Activated T-helper 2 cell treated with anti-CD3 and anti-CD28 coated beads, Interferon-gamma antibody, Interleukin-2, Interleukin-4, amounts not matched to agents 10 μg/mL and 5 μg/mL and 100 μg/mL, durations not matched to agents 14 hours and 24 hours and 36 hours (primary cell): ENCODE measurements at regions of chr2 and their contacts with region 1.

Region 1: GRCh38 chr2:73828818-73829570 is at the start of gene STAMBP:
- DNase-seq: peak; percentile 89
- H3K4me3 Mint-ChIP-seq: peak within 1 kb of the TSS; percentile 99
- H3K27ac Mint-ChIP-seq: peak within 1 kb of the TSS; percentile 98
- H3K4me1 Mint-ChIP-seq: peaks cover 44% of the 10 kb centered on the region
- H3K27me3 Mint-ChIP-seq: peaks cover 3% of the 10 kb centered on the region
- total RNA-seq, gene STAMBP: 54.3 and 63.4 TPM in 2 replicates

Region 2: GRCh38 chr2:73233154-73233931 is 595.7 kb before region 1 on chr2 and contains the start of gene PRADC1:
- intact Hi-C with region 1: no loop called
- DNase-seq: peak; percentile 96
- H3K4me3 Mint-ChIP-seq: peak within 1 kb of the TSS; percentile 96
- H3K27ac Mint-ChIP-seq: peak within 1 kb of the TSS; percentile 92
- H3K4me1 Mint-ChIP-seq: peaks cover 31% of the 10 kb centered on the region
- H3K27me3 Mint-ChIP-seq: no peaks in the 10 kb centered on the region
- total RNA-seq, gene PRADC1: 10.5 and 11.4 TPM in 2 replicates

Region 3: DNA sequence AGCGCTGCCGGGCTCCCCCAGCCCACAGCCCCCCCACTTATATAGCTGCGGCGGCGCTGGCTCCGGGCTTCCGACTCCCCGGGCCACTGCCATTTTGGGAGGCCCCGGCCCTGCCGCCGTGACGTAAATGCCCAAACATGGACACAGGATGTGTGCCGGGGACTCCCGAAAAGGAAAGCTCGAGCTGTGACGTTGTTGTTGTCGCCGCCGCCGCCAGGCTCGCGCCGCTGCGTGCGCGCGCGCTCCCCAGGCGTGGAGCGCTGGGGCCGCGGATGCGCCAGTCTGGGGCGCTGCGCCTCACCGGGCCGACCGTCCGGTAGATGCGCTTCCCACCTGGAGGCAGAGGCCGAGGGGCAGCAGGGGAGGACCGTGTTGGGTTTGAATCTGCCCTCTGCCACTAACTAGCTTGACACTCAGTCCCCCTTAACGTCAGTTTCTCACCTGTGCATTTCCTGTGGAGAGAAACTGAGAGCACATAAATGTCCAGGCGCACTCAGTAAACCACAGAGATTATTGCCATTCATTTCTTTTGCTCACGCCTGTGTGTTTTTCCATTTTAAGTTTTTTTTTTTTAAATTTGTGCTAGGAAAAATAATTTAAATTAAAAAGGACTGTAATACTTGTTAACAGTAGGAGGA is 535.3 kb before region 1 on chr2 and contains the start of gene EGR4:
- intact Hi-C with region 1: no loop called
- DNase-seq: peak; percentile 87
- H3K4me3 Mint-ChIP-seq: peak within 1 kb of the TSS; percentile 69
- H3K27ac Mint-ChIP-seq: no peak within 1 kb of the TSS
- H3K4me1 Mint-ChIP-seq: peaks cover 5% of the 10 kb centered on the region
- H3K27me3 Mint-ChIP-seq: peaks cover 67% of the 10 kb centered on the region
- total RNA-seq, gene EGR4: 0.46 and 0.53 TPM in 2 replicates

Region 4: DNA sequence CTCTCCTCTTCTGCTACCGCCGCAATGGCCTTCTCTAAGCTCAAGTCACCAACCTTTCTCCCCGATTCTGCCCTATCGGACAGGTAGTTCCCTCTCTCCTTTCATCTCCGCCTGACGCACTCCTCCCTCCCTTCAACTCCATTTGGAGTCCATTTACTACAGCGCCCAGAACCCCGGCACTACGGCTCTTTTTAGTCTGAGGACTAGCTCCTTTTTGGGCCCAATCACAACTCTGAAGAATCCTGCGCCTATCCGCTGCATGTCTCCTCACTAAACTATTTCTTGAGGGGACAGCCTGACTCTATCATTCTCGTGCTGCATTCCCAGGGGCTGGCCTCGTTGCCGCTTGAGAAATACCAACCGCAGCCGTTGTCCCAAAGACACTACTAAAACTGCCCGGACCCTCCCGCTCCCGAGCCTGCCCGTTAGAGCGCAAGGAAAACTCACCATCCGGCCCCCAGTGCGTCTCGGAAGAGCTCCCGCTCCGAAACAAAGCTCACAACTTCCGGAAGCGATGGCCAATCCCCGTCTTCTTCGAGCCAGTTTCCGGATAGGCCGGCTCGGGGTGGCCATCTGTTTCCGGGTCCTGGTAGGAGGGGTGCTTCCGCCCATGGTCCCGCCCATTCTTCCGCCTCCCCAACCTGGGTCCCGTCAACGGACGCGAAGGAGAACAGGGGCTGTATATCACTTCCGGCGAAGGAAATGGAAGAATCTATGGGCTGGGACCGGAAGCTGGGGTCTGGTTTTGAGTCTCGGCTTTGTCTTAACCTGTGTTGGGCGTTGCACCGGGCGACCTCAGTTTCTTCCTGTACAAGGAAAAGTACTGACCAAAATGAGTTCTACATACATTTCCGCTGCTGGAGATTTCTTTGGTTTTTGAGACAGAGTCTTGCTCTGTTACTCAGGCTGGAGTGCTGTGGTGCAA is 91.9 kb before region 1 on chr2 and contains the start of gene TPRKB:
- intact Hi-C with region 1: loop called (anchors 1 kb)
- DNase-seq: peak; percentile 95
- H3K4me3 Mint-ChIP-seq: peak within 1 kb of the TSS; percentile 97
- H3K27ac Mint-ChIP-seq: peak within 1 kb of the TSS; percentile 87
- H3K4me1 Mint-ChIP-seq: peaks cover 8% of the 10 kb centered on the region
- H3K27me3 Mint-ChIP-seq: no peaks in the 10 kb centered on the region
- total RNA-seq, gene TPRKB: 31.9 and 36.0 TPM in 2 replicates

Region 5: GRCh38 chr2:73859721-73860586 is 31.0 kb after region 1 on chr2:
- intact Hi-C with region 1: loop called (anchors 1 kb)
- DNase-seq: no peak
- H3K4me3 Mint-ChIP-seq: no peak overlapping the region
- H3K27ac Mint-ChIP-seq: peak overlapping the region; percentile 57
- H3K4me1 Mint-ChIP-seq: peaks cover 47% of the 10 kb centered on the region
- H3K27me3 Mint-ChIP-seq: no peaks in the 10 kb centered on the region

Region 6: GRCh38 chr2:73896362-73897239 is 67.6 kb after region 1 on chr2:
- intact Hi-C with region 1: loop called (anchors 1 kb)
- DNase-seq: peak; percentile 24
- H3K4me3 Mint-ChIP-seq: peak overlapping the region; percentile 42
- H3K27ac Mint-ChIP-seq: peak overlapping the region; percentile 92
- H3K4me1 Mint-ChIP-seq: peaks cover 35% of the 10 kb centered on the region
- H3K27me3 Mint-ChIP-seq: no peaks in the 10 kb centered on the region

Region 7: DNA sequence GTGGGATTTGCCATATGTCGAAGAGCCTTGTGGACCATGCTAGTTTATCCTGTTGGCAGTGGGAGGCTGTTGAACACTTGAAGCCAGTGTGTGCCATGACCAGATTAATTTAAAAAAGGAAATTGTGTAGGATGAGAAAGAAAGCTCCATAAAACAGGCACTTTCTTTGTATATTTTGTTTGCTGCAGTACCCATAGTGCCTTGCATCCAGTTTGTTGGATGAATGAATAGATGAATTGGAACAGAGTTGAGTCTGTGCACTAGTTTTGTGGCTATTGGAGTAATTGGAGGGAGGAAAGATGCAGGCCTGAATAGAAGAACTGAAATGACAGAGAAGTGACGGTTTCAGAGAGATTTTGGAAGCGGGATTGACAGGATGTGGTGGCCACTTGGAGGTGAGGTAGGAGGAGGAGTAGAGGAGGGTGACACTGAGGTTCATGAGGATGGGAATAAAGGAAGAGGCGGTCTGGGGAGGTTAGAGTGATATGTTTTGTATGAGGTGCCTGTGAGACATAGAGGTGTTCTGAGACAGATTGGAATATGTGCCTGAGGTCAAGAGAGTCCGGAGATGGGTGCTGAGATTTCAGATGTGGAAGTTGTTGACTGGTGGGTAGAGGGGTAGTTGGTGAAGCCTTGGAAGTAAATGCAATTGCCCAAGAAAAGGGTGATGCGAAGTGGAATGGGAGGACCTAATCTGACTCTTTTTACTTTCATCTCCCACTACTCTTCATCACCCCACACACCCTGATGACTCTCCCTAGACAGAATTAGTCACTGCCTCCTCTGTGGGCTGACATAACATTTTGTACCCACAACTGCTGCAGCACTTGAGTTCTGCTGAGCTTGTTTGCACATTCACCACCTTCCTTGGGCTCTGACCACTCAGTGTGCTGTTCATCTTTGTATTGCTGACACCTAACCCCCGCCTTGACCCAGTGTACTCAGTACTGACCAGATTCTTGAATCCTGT is 102.8 kb after region 1 on chr2:
- intact Hi-C with region 1: loop called (anchors 1 kb)
- DNase-seq: no peak
- H3K4me3 Mint-ChIP-seq: peak overlapping the region; percentile 17
- H3K27ac Mint-ChIP-seq: peak overlapping the region; percentile 81
- H3K4me1 Mint-ChIP-seq: peaks cover 65% of the 10 kb centered on the region
- H3K27me3 Mint-ChIP-seq: no peaks in the 10 kb centered on the region

Region 8: GRCh38 chr2:74002487-74003391 is 173.7 kb after region 1 on chr2:
- intact Hi-C with region 1: loop called (anchors 5 kb)
- DNase-seq: peak; percentile 76
- H3K4me3 Mint-ChIP-seq: peak overlapping the region; percentile 79
- H3K27ac Mint-ChIP-seq: no peak overlapping the region
- H3K4me1 Mint-ChIP-seq: peaks cover 69% of the 10 kb centered on the region
- H3K27me3 Mint-ChIP-seq: no peaks in the 10 kb centered on the region

Region 9: DNA sequence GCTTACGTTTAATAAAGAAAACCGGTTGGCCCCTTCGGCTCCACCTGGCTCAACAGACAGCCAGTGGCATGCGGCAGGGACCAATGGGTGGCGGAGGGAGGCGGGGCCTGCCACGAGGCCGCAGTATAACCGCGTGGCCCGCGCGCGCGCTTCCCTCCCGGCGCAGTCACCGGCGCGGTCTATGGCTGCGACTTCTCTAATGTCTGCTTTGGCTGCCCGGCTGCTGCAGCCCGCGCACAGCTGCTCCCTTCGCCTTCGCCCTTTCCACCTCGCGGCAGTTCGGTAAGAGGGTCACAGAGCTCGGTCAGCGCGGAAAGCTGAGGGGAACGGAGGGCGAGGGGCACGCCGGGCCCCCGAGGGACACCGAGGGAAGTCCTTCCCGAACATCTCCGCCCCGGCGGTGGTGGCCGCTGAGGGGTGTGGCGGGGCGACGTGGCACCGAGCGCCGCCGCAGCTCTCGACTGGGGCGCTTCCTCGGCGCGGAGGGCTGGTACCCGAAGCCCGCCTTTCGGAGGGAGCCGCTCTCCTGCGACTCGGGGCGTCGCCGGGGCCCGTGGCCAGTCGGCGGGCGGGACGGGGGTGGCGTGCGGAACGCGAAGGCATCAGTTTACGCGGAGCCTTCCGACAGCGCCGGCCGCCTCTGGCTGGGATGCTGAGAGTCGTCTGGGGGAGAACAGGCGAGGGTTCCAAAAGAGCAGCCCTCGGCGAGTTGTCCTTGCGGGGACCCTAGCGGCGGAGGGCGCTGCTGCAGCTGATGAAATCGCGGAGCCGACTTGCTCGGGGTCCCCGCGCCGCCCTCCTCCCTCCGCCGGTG is 369.7 kb after region 1 on chr2 and contains the start of gene MTHFD2:
- intact Hi-C with region 1: loop called (anchors 2 kb)
- DNase-seq: peak; percentile 93
- H3K4me3 Mint-ChIP-seq: peak within 1 kb of the TSS; percentile 100
- H3K27ac Mint-ChIP-seq: peak within 1 kb of the TSS; percentile 100
- H3K4me1 Mint-ChIP-seq: peaks cover 38% of the 10 kb centered on the region
- H3K27me3 Mint-ChIP-seq: no peaks in the 10 kb centered on the region
- total RNA-seq, gene MTHFD2: 371 and 381 TPM in 2 replicates